A549 (cell line): ENCODE measurements at regions of chr3 and their contacts with region 1.

Region 1: GRCh38 chr3:187714404-187714979 is 12.1 kb upstream of the RTP2 start:
- DNase-seq: peak; percentile 59 to 65
- ATAC-seq: peak; percentile 91 to 94
- H3K4me3 ChIP-seq: no peak overlapping the region
- H3K27ac ChIP-seq: no peak overlapping the region
- H3K4me1 ChIP-seq: no peaks in the 10 kb centered on the region
- CTCF ChIP-seq: peak; percentile 71
- EP300 ChIP-seq: no peak
- POLR2A ChIP-seq: no peak
- RAD21 ChIP-seq: peak; percentile 85 to 91

Region 2: GRCh38 chr3:187227658-187228258 is 486.7 kb before region 1 on chr3:
- CTCF ChIA-PET with region 1: interaction called, 16 read pairs
- POLR2A ChIA-PET with region 1: no interaction called
- DNase-seq: peak; percentile 30 to 33
- ATAC-seq: peak; percentile 86 to 93
- H3K4me3 ChIP-seq: no peak overlapping the region
- H3K27ac ChIP-seq: peak overlapping the region in 1 of 2 experiments; percentile 19; a peak in 1 of 6 replicates
- H3K4me1 ChIP-seq: peaks cover 14% of the 10 kb centered on the region
- CTCF ChIP-seq: no peak
- EP300 ChIP-seq: no peak
- POLR2A ChIP-seq: no peak
- RAD21 ChIP-seq: no peak

Region 3: DNA sequence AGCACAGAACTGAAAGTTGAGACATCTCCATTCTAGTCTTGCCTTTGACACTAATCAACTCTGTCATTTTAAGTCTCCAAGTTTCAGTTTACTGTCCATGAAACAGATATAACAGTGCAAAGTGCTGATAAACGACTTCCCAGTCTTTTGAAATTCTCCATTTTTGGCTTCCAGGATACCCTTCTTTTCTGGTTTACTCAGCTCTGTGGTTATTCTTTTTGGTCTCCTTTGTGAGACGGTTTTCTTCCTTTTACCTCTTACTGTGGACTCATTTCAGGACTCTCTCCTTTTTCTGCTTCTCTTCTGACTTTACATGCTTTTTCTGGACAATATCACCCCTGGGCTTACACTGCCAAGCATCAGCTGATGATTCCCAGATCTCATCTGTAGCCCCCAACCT is 63.2 kb before region 1 on chr3:
- CTCF ChIA-PET with region 1: no interaction called
- POLR2A ChIA-PET with region 1: no interaction called
- DNase-seq: no peak
- ATAC-seq: no peak
- H3K4me3 ChIP-seq: no peak overlapping the region
- H3K27ac ChIP-seq: no peak overlapping the region
- H3K4me1 ChIP-seq: no peaks in the 10 kb centered on the region
- CTCF ChIP-seq: no peak
- EP300 ChIP-seq: no peak
- POLR2A ChIP-seq: no peak
- RAD21 ChIP-seq: no peak

Region 4: GRCh38 chr3:187669675-187670504 is 44.6 kb before region 1 on chr3 and contains the start of gene SST:
- CTCF ChIA-PET with region 1: no interaction called
- POLR2A ChIA-PET with region 1: no interaction called
- DNase-seq: peak in 1 of 2 experiments; percentile 13
- ATAC-seq: 0 out of 6 replicates have a peak, but pooled peaks of 1 of the 2 experiments have one; percentile 59
- H3K4me3 ChIP-seq: no peak within 1 kb of the TSS
- H3K27ac ChIP-seq: no peak within 1 kb of the TSS
- H3K4me1 ChIP-seq: no peaks in the 10 kb centered on the region
- CTCF ChIP-seq: no peak
- EP300 ChIP-seq: no peak
- POLR2A ChIP-seq: no peak
- RAD21 ChIP-seq: no peak
- polyA plus RNA-seq, gene SST: not detected in 2 replicates